ENCODE measurements at regions of chr11 and their contacts with region 1.

Region 1: DNA sequence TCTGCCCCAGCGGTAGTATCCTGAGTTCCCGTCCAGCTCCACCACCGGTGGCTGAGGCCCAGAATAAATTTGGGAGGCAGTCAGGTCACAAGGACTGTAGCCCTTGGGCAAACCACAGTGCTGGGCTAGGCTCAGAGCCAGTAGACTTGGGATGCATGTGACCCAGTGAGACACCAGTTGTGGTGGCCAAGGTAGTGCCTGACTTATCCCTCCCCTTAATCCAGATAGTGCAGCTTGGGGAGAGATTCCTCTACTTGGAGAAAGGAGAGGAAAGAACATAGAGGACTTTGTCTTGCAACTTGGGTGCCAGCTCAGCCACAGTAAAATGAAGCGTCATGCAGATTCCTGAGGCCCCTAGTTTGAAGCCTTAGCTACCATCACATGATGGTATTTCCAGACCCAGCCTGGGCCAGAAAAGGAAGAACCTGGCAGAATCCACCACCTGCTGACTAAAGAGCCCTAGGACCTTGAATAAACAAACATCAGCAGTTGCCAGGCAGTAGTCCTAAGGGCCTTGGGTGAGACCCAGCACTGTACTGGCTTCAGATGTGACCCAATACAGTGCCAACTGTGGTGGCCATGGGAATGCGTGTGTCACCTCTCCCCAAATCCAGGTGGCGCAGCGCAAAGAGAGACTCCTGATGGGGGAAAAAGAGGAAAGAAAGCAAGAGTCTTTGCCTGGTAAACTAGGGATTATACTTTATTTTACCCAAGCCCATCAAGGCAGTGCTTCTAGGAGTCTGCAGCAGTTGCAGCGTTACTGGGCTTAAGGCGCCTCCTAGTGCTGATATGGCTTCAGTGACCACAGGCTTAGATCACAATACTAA is 17.0 kb upstream of the DDX10 start:
- DNase-seq: peak; percentile 50
- ATAC-seq: peak; percentile 98
- H3K4me3 ChIP-seq: no peak overlapping the region
- H3K27ac ChIP-seq: no peak overlapping the region
- H3K4me1 ChIP-seq: no peaks in the 10 kb centered on the region
- H3K27me3 ChIP-seq: no peaks in the 10 kb centered on the region
- CTCF ChIP-seq: peak; percentile 92
- EP300 ChIP-seq: no peak
- POLR2A ChIP-seq: no peak
- RAD21 ChIP-seq: peak; percentile 80

Region 2: GRCh38 chr11:108121274-108122155 is 526.4 kb before region 1 on chr11 and contains the start of gene ACAT1:
- CTCF ChIA-PET with region 1: no interaction called
- POLR2A ChIA-PET with region 1: no interaction called
- in situ Hi-C with region 1: loop called (anchors 10 kb)
- intact Hi-C with region 1: loop called (anchors 2 kb)
- DNase-seq: peak; percentile 91
- ATAC-seq: peak; percentile 97
- H3K4me3 ChIP-seq: peak within 1 kb of the TSS; percentile 77 to 85 (median 82)
- H3K27ac ChIP-seq: peak within 1 kb of the TSS; percentile 82
- H3K4me1 ChIP-seq: peaks cover 37% of the 10 kb centered on the region
- H3K27me3 ChIP-seq: no peaks in the 10 kb centered on the region; a peak in 1 of 5 replicates
- CTCF ChIP-seq: peak; percentile 45; the same call in 1 of the 2 replicates
- EP300 ChIP-seq: no peak
- POLR2A ChIP-seq: peak; percentile 89 to 95
- RAD21 ChIP-seq: peak; percentile 45; the same call in 1 of the 2 replicates
- total RNA-seq, gene ACAT1: 165 and 181 TPM in 2 replicates

Region 3: DNA sequence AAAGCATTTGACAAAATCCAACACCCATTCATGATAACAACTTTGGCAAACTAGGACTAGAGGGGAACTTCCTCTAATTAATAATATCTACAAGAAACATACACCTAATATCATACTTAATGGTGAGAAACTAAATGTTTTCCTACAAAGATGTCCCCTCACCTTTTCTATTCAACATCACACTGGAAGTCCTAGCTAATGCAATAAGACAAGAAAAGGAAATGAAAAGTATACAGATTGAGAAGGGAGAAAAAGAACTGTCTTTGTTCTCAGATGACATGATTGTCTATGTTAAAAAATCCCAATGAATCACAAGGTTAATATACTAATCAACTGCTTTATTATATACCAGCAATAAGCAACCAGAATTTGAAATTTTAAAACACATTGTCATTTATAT is 233.0 kb before region 1 on chr11:
- CTCF ChIA-PET with region 1: interaction called, 42 read pairs
- POLR2A ChIA-PET with region 1: no interaction called
- in situ Hi-C with region 1: loop called (anchors 5 kb)
- intact Hi-C with region 1: loop called (anchors 1 kb)
- DNase-seq: no peak
- ATAC-seq: no peak
- H3K4me3 ChIP-seq: no peak overlapping the region
- H3K27ac ChIP-seq: no peak overlapping the region
- H3K4me1 ChIP-seq: no peaks in the 10 kb centered on the region
- H3K27me3 ChIP-seq: no peaks in the 10 kb centered on the region
- CTCF ChIP-seq: no peak
- EP300 ChIP-seq: no peak
- POLR2A ChIP-seq: no peak
- RAD21 ChIP-seq: no peak

Region 4: GRCh38 chr11:108672113-108672512 is 24.2 kb after region 1 on chr11:
- CTCF ChIA-PET with region 1: no interaction called
- POLR2A ChIA-PET with region 1: no interaction called
- in situ Hi-C with region 1: no loop called
- intact Hi-C with region 1: no loop called
- DNase-seq: no peak
- ATAC-seq: no peak
- H3K4me3 ChIP-seq: no peak overlapping the region
- H3K27ac ChIP-seq: no peak overlapping the region
- H3K4me1 ChIP-seq: peaks cover 31% of the 10 kb centered on the region
- H3K27me3 ChIP-seq: no peaks in the 10 kb centered on the region
- CTCF ChIP-seq: no peak
- EP300 ChIP-seq: no peak
- POLR2A ChIP-seq: no peak
- RAD21 ChIP-seq: no peak